Activated T-helper 2 cell treated with anti-CD3 and anti-CD28 coated beads, Interferon-gamma antibody, Interleukin-2, Interleukin-4, amounts not matched to agents 10 μg/mL and 5 μg/mL and 100 μg/mL, durations not matched to agents 14 hours and 24 hours and 36 hours (primary cell): ENCODE measurements at regions of chr7 and their contacts with region 1.

Region 1: DNA sequence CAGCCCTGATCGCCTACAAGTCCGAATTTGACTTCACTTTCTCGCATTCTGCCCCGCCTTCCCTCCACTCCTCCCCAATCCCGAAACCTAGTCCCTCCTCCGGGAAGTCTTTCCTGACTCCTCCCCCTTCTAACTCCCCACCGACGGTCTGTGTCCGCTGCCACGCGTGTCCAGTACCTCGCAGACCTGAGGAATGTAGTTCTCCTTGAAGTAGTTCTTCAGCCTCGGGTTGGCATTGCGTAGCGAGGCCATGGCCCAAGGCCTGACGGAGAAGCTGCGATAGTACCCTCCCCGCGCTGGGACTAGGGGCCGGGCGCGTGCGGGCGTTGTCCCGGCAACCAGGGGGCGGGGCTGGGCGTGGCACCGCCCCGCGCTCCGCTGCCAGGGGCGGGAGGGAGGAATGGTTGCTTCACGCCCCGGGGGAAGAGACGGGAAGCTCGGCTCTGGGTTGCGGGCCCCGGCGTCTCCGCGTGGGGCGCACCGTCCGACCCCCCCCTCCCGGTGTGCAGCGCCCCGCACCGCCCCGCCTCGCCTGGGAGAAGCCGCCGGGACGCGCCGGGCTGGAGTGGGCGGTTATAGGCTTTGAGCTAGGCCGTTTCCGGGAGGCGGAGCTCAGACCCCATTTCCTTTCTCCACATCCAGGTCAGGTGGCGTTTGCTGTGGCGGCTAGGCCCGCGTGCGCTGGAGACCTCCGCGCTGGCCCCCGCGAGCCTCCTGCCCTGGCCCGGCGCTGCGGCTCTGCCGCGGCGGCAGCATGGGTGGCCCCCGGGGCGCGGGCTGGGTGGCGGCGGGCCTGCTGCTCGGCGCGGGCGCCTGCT is at the starts of genes ARMC10 and FBXL13:
- DNase-seq: peak; percentile 83
- H3K4me3 Mint-ChIP-seq: peak within 1 kb of the TSS; percentile 93
- H3K27ac Mint-ChIP-seq: peak within 1 kb of the TSS; percentile 90
- H3K4me1 Mint-ChIP-seq: peaks cover 26% of the 10 kb centered on the region
- H3K27me3 Mint-ChIP-seq: peaks cover 2% of the 10 kb centered on the region
- total RNA-seq, gene ARMC10: 46.9 and 49.1 TPM in 2 replicates
- total RNA-seq, gene FBXL13: 0.41 and 0.76 TPM in 2 replicates

Region 2: GRCh38 chr7:103148994-103149807 is 74.5 kb after region 1 on chr7 and contains the start of gene NAPEPLD:
- intact Hi-C with region 1: loop called (anchors 1 kb)
- DNase-seq: peak; percentile 70
- H3K4me3 Mint-ChIP-seq: peak within 1 kb of the TSS; percentile 97
- H3K27ac Mint-ChIP-seq: peak within 1 kb of the TSS; percentile 97
- H3K4me1 Mint-ChIP-seq: peaks cover 35% of the 10 kb centered on the region
- H3K27me3 Mint-ChIP-seq: no peaks in the 10 kb centered on the region
- total RNA-seq, gene NAPEPLD: 9.6 and 10.7 TPM in 2 replicates

Region 3: DNA sequence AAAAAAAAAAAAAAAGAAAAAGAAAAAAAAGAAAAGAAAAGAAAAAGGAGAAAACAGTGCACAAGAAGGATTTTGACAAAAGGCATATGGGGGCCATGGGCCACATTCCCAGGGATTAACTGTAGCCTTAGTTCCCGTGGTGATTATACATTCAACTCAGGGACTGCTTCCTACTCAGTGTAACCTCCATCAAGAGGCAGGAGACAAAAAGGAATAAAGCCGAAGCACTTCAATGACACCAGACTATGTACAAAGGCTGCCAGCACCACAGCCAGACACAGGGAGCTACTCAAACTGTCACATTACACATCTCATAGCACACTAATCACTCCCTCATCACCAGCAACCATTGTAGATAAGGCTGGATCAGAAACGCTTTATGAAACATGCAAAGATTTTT is 217.4 kb after region 1 on chr7:
- intact Hi-C with region 1: loop called (anchors 10 kb)
- DNase-seq: no peak
- H3K4me3 Mint-ChIP-seq: no peak overlapping the region
- H3K27ac Mint-ChIP-seq: no peak overlapping the region
- H3K4me1 Mint-ChIP-seq: peaks cover 6% of the 10 kb centered on the region
- H3K27me3 Mint-ChIP-seq: peaks cover 22% of the 10 kb centered on the region